ENCODE measurements at regions of chr3 and their contacts with region 1.

Region 1: GRCh38 chr3:13452490-13453335 is 27.4 kb upstream of the HDAC11 start:
- DNase-seq: no peak
- H3K4me3 ChIP-seq: peak overlapping the region in 1 of 2 donors; percentile 45
- H3K27ac ChIP-seq: peak overlapping the region; percentile 74 to 95
- H3K4me1 ChIP-seq: no peaks in the 10 kb centered on the region
- H3K27me3 ChIP-seq: no peaks in the 10 kb centered on the region
- CTCF ChIP-seq: peak; percentile 55 to 70 (median 62)
- POLR2A ChIP-seq: no peak

Region 2: DNA sequence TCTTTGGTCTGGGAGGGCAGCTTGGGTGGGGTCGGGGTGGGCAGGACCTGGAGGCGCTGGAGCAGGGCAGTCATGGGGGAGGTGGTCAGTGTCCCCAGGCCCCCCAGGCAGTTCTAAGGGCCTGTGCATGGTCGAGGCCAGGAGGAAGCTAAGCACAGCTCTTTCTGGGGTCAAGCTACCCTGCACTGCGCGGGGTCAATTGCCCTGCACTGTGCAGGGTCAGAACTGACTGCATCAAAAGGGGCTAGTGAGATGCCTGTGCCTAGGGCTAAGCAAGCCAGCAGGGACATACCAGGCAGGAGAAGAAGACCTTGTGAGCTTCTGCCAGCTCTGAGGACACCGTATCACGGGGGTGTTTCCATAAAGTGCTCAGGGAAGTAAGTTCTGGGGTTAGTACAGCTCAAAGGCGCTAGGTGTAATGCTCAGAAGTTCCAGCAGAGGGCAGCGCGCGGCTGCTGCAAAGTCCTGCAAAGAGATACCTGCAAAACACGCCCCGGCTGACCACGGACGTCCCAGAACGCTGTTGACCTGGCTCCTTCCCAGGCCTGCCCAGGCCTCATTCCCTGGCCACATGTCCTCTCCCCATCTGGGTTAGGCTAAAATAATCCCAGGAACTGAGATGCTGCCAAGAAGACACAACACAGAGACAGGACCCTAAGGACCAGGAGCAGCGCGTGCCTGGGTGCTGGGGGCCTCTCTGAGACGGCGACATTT is 360.7 kb before region 1 on chr3:
- intact Hi-C with region 1: loop called (anchors 10 kb)
- DNase-seq: peak; percentile 75 to 79
- H3K4me3 ChIP-seq: no peak overlapping the region
- H3K27ac ChIP-seq: no peak overlapping the region
- H3K4me1 ChIP-seq: no peaks in the 10 kb centered on the region
- H3K27me3 ChIP-seq: no peaks in the 10 kb centered on the region
- CTCF ChIP-seq: peak; percentile 82 to 90 (median 86)
- POLR2A ChIP-seq: no peak

Region 3: DNA sequence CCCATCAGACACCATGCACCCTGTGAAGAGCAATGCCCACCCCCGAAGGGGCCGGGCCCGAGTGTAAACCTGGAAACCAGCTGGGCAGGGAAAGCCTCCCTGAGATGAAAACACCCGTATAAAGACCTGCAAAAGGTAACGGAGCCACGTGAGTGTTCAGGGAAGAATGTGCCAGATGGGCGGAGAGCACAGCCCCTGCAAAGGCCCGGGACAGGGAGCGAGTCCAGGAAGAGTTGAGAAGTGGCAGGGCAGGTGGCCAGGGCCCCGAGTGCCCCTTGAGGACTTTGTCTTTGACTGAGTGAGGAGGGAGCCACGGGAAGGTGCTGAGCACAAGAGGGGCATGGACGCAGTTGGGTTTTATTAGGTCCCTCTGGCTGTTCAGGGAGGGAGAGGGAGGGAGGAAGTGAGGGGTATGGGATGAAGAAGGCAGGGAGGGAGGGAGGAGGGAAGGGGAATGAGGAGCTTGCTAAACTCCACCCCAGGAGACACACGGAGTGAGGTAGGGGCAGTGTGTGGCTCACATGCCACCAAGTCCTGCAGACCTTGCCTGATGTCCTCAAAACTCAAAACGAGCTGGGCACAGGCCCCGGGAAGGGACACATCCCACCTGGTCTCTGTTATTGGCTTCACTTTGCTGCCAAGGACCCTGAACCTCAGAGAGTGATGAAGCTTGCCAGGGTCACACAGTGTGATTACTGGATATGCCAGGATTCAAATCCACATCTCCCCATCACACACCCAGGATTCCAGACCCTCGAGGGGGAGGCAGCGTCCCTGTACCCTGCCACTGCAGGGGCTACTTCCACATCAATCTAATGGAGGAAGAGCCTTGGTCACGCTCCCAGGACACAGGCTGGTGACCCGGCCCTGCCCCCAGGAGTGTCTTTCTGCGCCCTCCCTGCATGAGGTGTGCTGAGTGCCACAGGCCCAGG is 330.4 kb before region 1 on chr3:
- intact Hi-C with region 1: no loop called
- DNase-seq: no peak
- H3K4me3 ChIP-seq: no peak overlapping the region
- H3K27ac ChIP-seq: no peak overlapping the region
- H3K4me1 ChIP-seq: no peaks in the 10 kb centered on the region
- H3K27me3 ChIP-seq: no peaks in the 10 kb centered on the region
- CTCF ChIP-seq: no peak
- POLR2A ChIP-seq: no peak

Region 4: GRCh38 chr3:13282986-13283876 is 169.5 kb before region 1 on chr3:
- intact Hi-C with region 1: no loop called
- DNase-seq: no peak
- H3K4me3 ChIP-seq: no peak overlapping the region
- H3K27ac ChIP-seq: no peak overlapping the region
- H3K4me1 ChIP-seq: peaks cover 0 to 9% of the 10 kb centered on the region in 2 donors
- H3K27me3 ChIP-seq: peaks cover 0 to 19% of the 10 kb centered on the region in 2 donors
- CTCF ChIP-seq: peak in 2 of 4 experiments; percentile 10 to 48
- POLR2A ChIP-seq: no peak

Region 5: DNA sequence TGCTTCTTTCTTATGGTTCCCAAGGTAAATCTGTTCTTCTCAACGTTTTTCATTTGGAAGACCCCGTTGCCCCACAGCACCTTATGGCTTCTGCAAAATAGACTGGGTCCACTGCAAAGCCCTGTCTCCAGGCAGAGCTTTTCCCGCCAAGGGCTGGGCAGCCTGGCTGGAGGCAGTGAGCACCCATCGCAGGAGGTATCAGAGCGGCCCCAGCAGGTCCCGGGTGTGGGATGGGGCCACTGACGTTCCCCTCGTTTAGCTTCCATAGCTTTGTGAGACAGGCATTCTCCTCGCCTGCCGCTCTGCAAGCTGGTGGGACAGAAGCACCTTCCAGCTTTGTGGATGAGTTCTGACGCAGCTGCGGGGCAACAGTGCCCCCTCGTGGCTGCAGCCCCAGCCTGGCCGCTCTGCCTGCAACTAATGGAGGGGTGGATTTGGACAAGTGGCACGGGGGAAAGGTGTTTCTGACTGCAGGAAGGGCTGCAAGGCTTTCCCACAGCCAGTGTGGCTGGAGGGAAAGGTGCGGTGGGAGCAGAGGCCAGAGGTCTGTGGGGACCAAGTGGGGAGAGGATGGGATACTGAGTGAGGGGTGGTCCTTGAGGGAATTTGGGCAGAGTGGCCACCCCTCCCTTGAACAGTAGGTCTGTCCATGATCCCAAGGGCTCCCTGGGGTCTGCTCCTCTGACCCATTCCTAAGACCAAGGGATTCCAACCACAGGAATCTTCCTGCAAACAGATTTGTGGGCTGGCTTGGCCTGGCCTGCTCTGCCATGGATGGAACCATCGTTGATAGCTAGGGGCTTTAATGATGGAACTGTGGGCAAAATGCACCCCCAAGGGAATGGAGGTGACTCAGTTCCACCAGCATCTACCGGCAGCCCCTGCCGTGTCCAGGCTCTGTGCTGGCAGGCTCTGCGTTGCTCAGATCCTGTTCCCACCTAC is 195.6 kb after region 1 on chr3:
- intact Hi-C with region 1: no loop called
- DNase-seq: peak; percentile 70 to 85
- H3K4me3 ChIP-seq: no peak overlapping the region
- H3K27ac ChIP-seq: no peak overlapping the region
- H3K4me1 ChIP-seq: peaks cover 0 to 9% of the 10 kb centered on the region in 2 donors
- H3K27me3 ChIP-seq: no peaks in the 10 kb centered on the region
- CTCF ChIP-seq: peak; percentile 84 to 96 (median 96)
- POLR2A ChIP-seq: no peak

Region 6: GRCh38 chr3:13705702-13706280 is 253.1 kb after region 1 on chr3:
- intact Hi-C with region 1: no loop called
- DNase-seq: peak; percentile 1 to 3
- H3K4me3 ChIP-seq: no peak overlapping the region
- H3K27ac ChIP-seq: no peak overlapping the region
- H3K4me1 ChIP-seq: no peaks in the 10 kb centered on the region
- H3K27me3 ChIP-seq: no peaks in the 10 kb centered on the region
- CTCF ChIP-seq: no peak
- POLR2A ChIP-seq: no peak